Activated CD4-positive, alpha-beta memory T cell treated with anti-CD3 and anti-CD28 coated beads for 36 hours (primary cell): ENCODE measurements at regions of chr22 and their contacts with region 1.

Region 1: DNA sequence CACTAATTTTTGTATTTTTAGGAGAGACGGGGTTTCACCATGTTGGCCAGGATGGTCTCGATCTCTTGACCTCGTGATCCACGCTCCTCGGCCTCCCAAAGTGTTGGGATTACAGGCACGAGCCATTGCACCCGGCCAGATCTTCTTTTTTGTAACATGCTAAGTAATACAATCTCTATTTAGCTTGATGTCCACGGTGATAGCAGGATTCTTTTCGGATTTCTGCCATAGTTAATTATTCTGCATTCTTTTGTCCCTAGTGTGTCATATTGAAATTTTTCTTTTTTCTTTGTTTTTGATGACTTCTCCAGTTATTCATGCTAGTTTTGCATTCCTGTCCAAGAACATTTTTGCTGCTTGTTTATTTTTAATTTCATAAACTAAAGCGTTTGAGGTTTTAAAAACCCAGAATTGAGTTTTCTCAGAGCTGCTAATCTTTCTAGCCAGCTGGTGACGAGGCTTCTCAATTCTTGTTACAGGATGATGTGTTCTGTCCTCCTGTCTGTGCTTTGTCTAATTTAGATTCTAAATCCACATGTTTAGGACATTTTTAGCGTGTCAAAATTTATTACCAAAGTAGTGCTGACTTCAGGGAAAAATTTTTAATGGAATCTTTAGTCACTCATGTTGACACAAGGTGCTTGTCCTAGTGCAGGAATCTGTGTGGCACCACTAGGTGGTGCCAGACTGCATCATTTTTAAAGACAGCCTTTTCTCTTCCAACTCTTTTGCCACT is 21.8 kb downstream of the NF2 start:
- DNase-seq: peak; percentile 57
- H3K4me3 Mint-ChIP-seq: no peak overlapping the region
- H3K27ac Mint-ChIP-seq: no peak overlapping the region
- H3K4me1 Mint-ChIP-seq: peaks cover 57% of the 10 kb centered on the region
- H3K27me3 Mint-ChIP-seq: no peaks in the 10 kb centered on the region

Region 2: GRCh38 chr22:29143941-29144785 is 481.1 kb before region 1 on chr22:
- CTCF ChIA-PET with region 1: no interaction called
- POLR2A ChIA-PET with region 1: no interaction called
- intact Hi-C with region 1: no loop called
- DNase-seq: no peak
- H3K4me3 Mint-ChIP-seq: no peak overlapping the region
- H3K27ac Mint-ChIP-seq: no peak overlapping the region
- H3K4me1 Mint-ChIP-seq: no peaks in the 10 kb centered on the region
- H3K27me3 Mint-ChIP-seq: no peaks in the 10 kb centered on the region

Region 3: DNA sequence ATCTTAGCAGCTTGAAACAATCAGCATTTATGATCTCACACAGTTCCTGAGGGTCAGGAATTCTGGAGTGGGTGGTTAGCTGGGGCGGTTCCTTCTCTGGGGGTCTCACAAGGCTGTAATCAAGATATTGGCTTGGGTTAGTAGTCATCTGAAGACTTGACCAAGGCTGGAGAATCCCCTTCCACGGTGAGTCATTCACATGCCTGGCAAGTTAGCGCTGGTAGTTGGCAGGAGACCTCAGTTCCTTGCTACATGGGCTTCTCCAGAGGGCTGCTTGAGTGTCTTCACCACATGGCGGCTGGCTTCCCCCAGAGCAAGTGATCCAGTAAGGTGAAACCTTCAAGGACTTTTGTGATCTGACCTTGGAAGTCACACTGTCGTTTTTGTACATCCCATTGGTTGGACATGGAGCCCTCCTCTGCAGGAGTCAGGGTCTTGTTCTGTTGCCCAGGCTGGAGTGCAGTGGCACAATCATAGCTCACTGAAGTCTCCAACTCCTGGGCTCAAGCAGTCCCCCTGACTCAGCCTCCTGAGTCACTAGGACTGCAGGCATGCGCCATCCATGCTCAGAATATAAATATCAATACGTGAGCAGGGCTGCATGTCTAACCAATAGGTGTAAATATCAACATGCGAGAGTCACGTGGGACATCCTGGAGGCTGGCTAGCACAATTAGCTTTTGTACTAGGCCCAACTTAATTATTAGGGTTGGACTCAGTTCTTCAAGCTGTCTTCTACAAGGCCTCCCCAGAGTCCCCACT is 37.1 kb before region 1 on chr22:
- CTCF ChIA-PET with region 1: interaction called, 8 read pairs
- POLR2A ChIA-PET with region 1: no interaction called
- intact Hi-C with region 1: loop called (anchors 2 kb)
- DNase-seq: no peak
- H3K4me3 Mint-ChIP-seq: no peak overlapping the region
- H3K27ac Mint-ChIP-seq: no peak overlapping the region
- H3K4me1 Mint-ChIP-seq: peaks cover 9% of the 10 kb centered on the region
- H3K27me3 Mint-ChIP-seq: no peaks in the 10 kb centered on the region

Region 4: DNA sequence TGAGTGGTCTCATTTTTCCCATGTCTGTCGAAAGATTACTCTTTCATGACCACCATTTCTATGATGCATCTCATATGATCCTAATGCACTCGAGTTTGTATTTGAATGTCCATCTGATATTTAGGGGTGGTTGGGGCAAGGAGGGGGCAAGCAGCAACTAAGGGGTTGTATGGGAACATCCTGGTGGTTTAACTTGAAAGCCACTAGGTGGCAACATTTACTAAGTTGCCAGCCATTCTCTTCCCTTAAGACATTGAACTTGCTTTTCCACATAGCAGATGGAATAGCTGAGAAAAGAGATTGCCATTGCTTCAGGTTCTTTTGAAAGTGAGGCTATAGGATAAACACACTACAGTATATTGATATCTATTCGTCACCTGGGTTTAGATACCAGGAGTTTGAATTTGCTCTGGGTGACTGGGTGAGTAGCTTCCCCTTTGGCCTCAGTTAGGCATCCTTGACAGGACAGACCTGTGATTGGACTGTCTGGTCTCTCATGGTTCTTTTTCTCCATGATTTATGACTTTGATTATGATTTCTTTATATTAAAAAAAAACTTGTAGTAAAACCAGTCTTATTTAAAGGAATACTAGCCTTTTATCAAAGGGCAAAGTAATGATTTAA is 10.6 kb after region 1 on chr22:
- CTCF ChIA-PET with region 1: interaction called, 27 read pairs
- POLR2A ChIA-PET with region 1: no interaction called
- intact Hi-C with region 1: no loop called
- DNase-seq: no peak
- H3K4me3 Mint-ChIP-seq: no peak overlapping the region
- H3K27ac Mint-ChIP-seq: no peak overlapping the region
- H3K4me1 Mint-ChIP-seq: peaks cover 16% of the 10 kb centered on the region
- H3K27me3 Mint-ChIP-seq: no peaks in the 10 kb centered on the region

Region 5: GRCh38 chr22:29641042-29641699 is 15.9 kb after region 1 on chr22:
- CTCF ChIA-PET with region 1: interaction called, 27 read pairs
- POLR2A ChIA-PET with region 1: no interaction called
- intact Hi-C with region 1: no loop called
- DNase-seq: no peak
- H3K4me3 Mint-ChIP-seq: no peak overlapping the region
- H3K27ac Mint-ChIP-seq: peak overlapping the region; percentile 61
- H3K4me1 Mint-ChIP-seq: peaks cover 16% of the 10 kb centered on the region
- H3K27me3 Mint-ChIP-seq: no peaks in the 10 kb centered on the region

Region 6: GRCh38 chr22:29773233-29773632 is 148.0 kb after region 1 on chr22:
- CTCF ChIA-PET with region 1: no interaction called
- POLR2A ChIA-PET with region 1: no interaction called
- intact Hi-C with region 1: no loop called
- DNase-seq: no peak
- H3K4me3 Mint-ChIP-seq: no peak overlapping the region
- H3K27ac Mint-ChIP-seq: no peak overlapping the region
- H3K4me1 Mint-ChIP-seq: peaks cover 7% of the 10 kb centered on the region
- H3K27me3 Mint-ChIP-seq: no peaks in the 10 kb centered on the region